ENCODE measurements at regions of chr1 and their contacts with region 1.

Region 1: GRCh38 chr1:186375088-186375953 is at the starts of genes ODR4 and TPR:
- DNase-seq: peak; percentile 96
- H3K4me3 Mint-ChIP-seq: peak within 1 kb of the TSS; percentile 94
- H3K27ac Mint-ChIP-seq: peak within 1 kb of the TSS; percentile 90
- H3K4me1 Mint-ChIP-seq: peaks cover 50% of the 10 kb centered on the region
- H3K27me3 Mint-ChIP-seq: no peaks in the 10 kb centered on the region
- total RNA-seq, gene ODR4: 10.0 to 10.8 TPM
- total RNA-seq, gene TPR: 117 to 122 TPM

Region 2: DNA sequence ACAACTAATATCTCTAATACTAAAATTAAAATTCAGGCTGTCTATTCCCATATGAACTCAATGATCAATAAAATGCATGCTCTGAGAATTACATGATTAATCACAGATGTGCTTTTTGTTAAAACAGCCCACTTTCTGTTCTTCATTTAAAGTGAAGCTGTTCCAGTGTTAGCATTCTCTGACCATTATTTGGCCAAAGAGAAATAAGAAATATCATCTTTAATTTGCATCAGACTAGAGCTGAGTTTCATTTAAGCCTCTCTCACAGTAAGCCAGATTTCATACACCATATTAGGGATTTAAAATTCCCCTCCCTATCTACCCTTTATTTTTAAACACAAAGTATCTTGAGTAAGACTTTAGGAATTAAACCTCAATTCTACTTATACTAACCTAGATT is 261.9 kb before region 1 on chr1:
- CTCF ChIA-PET with region 1: no interaction called
- POLR2A ChIA-PET with region 1: no interaction called
- DNase-seq: no peak
- H3K4me3 Mint-ChIP-seq: no peak overlapping the region
- H3K27ac Mint-ChIP-seq: no peak overlapping the region
- H3K4me1 Mint-ChIP-seq: no peaks in the 10 kb centered on the region
- H3K27me3 Mint-ChIP-seq: no peaks in the 10 kb centered on the region

Region 3: GRCh38 chr1:186325239-186325638 is 50.1 kb before region 1 on chr1:
- CTCF ChIA-PET with region 1: interaction called, 10 read pairs
- POLR2A ChIA-PET with region 1: interaction called, 5 read pairs
- DNase-seq: no peak
- H3K4me3 Mint-ChIP-seq: no peak overlapping the region
- H3K27ac Mint-ChIP-seq: no peak overlapping the region
- H3K4me1 Mint-ChIP-seq: peaks cover 13% of the 10 kb centered on the region
- H3K27me3 Mint-ChIP-seq: no peaks in the 10 kb centered on the region

Region 4: GRCh38 chr1:186363891-186364290 is 11.4 kb before region 1 on chr1:
- CTCF ChIA-PET with region 1: interaction called, 18 read pairs
- POLR2A ChIA-PET with region 1: interaction called, 3 read pairs
- DNase-seq: no peak
- H3K4me3 Mint-ChIP-seq: no peak overlapping the region
- H3K27ac Mint-ChIP-seq: no peak overlapping the region
- H3K4me1 Mint-ChIP-seq: peaks cover 3% of the 10 kb centered on the region
- H3K27me3 Mint-ChIP-seq: no peaks in the 10 kb centered on the region

Region 5: GRCh38 chr1:186386725-186387383 is 11.5 kb after region 1 on chr1:
- CTCF ChIA-PET with region 1: interaction called, 20 read pairs
- POLR2A ChIA-PET with region 1: interaction called, 10 read pairs
- DNase-seq: no peak
- H3K4me3 Mint-ChIP-seq: no peak overlapping the region
- H3K27ac Mint-ChIP-seq: no peak overlapping the region
- H3K4me1 Mint-ChIP-seq: peaks cover 4% of the 10 kb centered on the region
- H3K27me3 Mint-ChIP-seq: no peaks in the 10 kb centered on the region

Region 6: GRCh38 chr1:186404454-186405051 is 29.2 kb after region 1 on chr1:
- CTCF ChIA-PET with region 1: interaction called, 15 read pairs
- POLR2A ChIA-PET with region 1: interaction called, 6 read pairs
- DNase-seq: no peak
- H3K4me3 Mint-ChIP-seq: no peak overlapping the region
- H3K27ac Mint-ChIP-seq: peak overlapping the region; percentile 21
- H3K4me1 Mint-ChIP-seq: peaks cover 5% of the 10 kb centered on the region
- H3K27me3 Mint-ChIP-seq: no peaks in the 10 kb centered on the region

Region 7: GRCh38 chr1:186420923-186421322 is 45.6 kb after region 1 on chr1:
- CTCF ChIA-PET with region 1: interaction called, 16 read pairs
- POLR2A ChIA-PET with region 1: interaction called, 4 read pairs
- DNase-seq: no peak
- H3K4me3 Mint-ChIP-seq: peak overlapping the region; percentile 25
- H3K27ac Mint-ChIP-seq: peak overlapping the region; percentile 81
- H3K4me1 Mint-ChIP-seq: peaks cover 22% of the 10 kb centered on the region
- H3K27me3 Mint-ChIP-seq: no peaks in the 10 kb centered on the region

Region 8: GRCh38 chr1:186442651-186443114 is 67.4 kb after region 1 on chr1:
- CTCF ChIA-PET with region 1: no interaction called
- POLR2A ChIA-PET with region 1: no interaction called
- DNase-seq: no peak
- H3K4me3 Mint-ChIP-seq: no peak overlapping the region
- H3K27ac Mint-ChIP-seq: no peak overlapping the region
- H3K4me1 Mint-ChIP-seq: peaks cover 30% of the 10 kb centered on the region
- H3K27me3 Mint-ChIP-seq: no peaks in the 10 kb centered on the region